ENCODE measurements at regions of chr7 and their contacts with region 1.

Region 1: GRCh38 chr7:127392566-127393367 is at the start of gene ZNF800:
- DNase-seq: peak; percentile 92
- H3K4me3 ChIP-seq: peak within 1 kb of the TSS; percentile 99
- H3K27ac ChIP-seq: peak within 1 kb of the TSS; percentile 84
- H3K4me1 ChIP-seq: peaks cover 49% of the 10 kb centered on the region
- CTCF ChIP-seq: no peak
- total RNA-seq, gene ZNF800: 23.8 and 23.9 TPM in 2 replicates

Region 2: DNA sequence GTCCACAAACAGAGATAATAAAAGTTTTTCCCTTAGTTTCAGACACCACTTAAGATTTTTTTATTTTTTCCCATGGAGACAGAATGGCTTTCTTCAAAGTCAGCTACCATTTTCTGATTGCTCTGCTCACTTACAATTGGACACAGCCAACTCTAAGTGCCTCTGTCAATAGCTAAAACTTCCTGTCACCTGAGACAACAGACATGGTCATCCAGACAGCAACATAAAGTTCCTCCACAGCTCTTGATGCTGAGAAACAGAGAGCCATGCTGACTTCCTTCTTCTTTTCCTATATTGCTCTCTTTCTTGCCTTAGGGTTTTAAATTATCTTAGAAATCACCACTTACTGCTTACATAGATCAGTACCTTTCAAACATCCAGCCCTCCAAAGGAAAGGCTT is 12.3 kb before region 1 on chr7:
- CTCF ChIA-PET with region 1: interaction called, 3 read pairs
- POLR2A ChIA-PET with region 1: interaction called, 17 read pairs
- intact Hi-C with region 1: no loop called
- DNase-seq: peak; percentile 13
- H3K4me3 ChIP-seq: no peak overlapping the region
- H3K27ac ChIP-seq: no peak overlapping the region
- H3K4me1 ChIP-seq: peaks cover 10% of the 10 kb centered on the region
- CTCF ChIP-seq: no peak

Region 3: GRCh38 chr7:127585044-127585953 is 192.5 kb after region 1 on chr7 and contains the start of gene GCC1:
- CTCF ChIA-PET with region 1: no interaction called
- POLR2A ChIA-PET with region 1: no interaction called
- intact Hi-C with region 1: loop called (anchors 5 kb)
- DNase-seq: peak; percentile 91
- H3K4me3 ChIP-seq: peak within 1 kb of the TSS; percentile 84
- H3K27ac ChIP-seq: peak within 1 kb of the TSS; percentile 7
- H3K4me1 ChIP-seq: peaks cover 35% of the 10 kb centered on the region
- CTCF ChIP-seq: no peak
- total RNA-seq, gene GCC1: 13.3 and 15.1 TPM in 2 replicates

Region 4: GRCh38 chr7:127651556-127652332 is 259.0 kb after region 1 on chr7 and contains the start of gene SND1:
- CTCF ChIA-PET with region 1: no interaction called
- POLR2A ChIA-PET with region 1: interaction called, 3 read pairs
- intact Hi-C with region 1: loop called (anchors 1 kb)
- DNase-seq: peak; percentile 99
- H3K4me3 ChIP-seq: peak within 1 kb of the TSS; percentile 93
- H3K27ac ChIP-seq: peak within 1 kb of the TSS; percentile 33
- H3K4me1 ChIP-seq: peaks cover 37% of the 10 kb centered on the region
- CTCF ChIP-seq: no peak
- total RNA-seq, gene SND1: 111 and 112 TPM in 2 replicates

Region 5: GRCh38 chr7:128108641-128109423 is 716.1 kb after region 1 on chr7:
- CTCF ChIA-PET with region 1: no interaction called
- POLR2A ChIA-PET with region 1: no interaction called
- intact Hi-C with region 1: loop called (anchors 10 kb)
- DNase-seq: peak; percentile 93
- H3K4me3 ChIP-seq: peak overlapping the region; percentile 51
- H3K27ac ChIP-seq: peak overlapping the region; percentile 95
- H3K4me1 ChIP-seq: peaks cover 86% of the 10 kb centered on the region
- CTCF ChIP-seq: no peak

Measured in OCI-LY7 (cell line).